ENCODE measurements at regions of chr4 and their contacts with region 1.

Region 1: GRCh38 chr4:107757864-107758476 is 37.9 kb upstream of the PAPSS1 start:
- DNase-seq: no peak
- H3K4me3 Mint-ChIP-seq: no peak overlapping the region
- H3K27ac Mint-ChIP-seq: no peak overlapping the region
- H3K4me1 Mint-ChIP-seq: no peaks in the 10 kb centered on the region
- H3K27me3 Mint-ChIP-seq: peaks cover 8% of the 10 kb centered on the region

Region 2: GRCh38 chr4:107115185-107115847 is 642.7 kb before region 1 on chr4:
- CTCF ChIA-PET with region 1: no interaction called
- DNase-seq: no peak
- H3K4me3 Mint-ChIP-seq: no peak overlapping the region
- H3K27ac Mint-ChIP-seq: no peak overlapping the region
- H3K4me1 Mint-ChIP-seq: no peaks in the 10 kb centered on the region
- H3K27me3 Mint-ChIP-seq: no peaks in the 10 kb centered on the region

Region 3: GRCh38 chr4:107780665-107781064 is 22.7 kb after region 1 on chr4:
- CTCF ChIA-PET with region 1: no interaction called
- DNase-seq: peak; percentile 23
- H3K4me3 Mint-ChIP-seq: no peak overlapping the region
- H3K27ac Mint-ChIP-seq: no peak overlapping the region
- H3K4me1 Mint-ChIP-seq: no peaks in the 10 kb centered on the region
- H3K27me3 Mint-ChIP-seq: peaks cover 3% of the 10 kb centered on the region

Region 4: GRCh38 chr4:107913281-107913899 is 155.4 kb after region 1 on chr4:
- CTCF ChIA-PET with region 1: interaction called, 11 read pairs
- DNase-seq: peak; percentile 22
- H3K4me3 Mint-ChIP-seq: no peak overlapping the region
- H3K27ac Mint-ChIP-seq: no peak overlapping the region
- H3K4me1 Mint-ChIP-seq: no peaks in the 10 kb centered on the region
- H3K27me3 Mint-ChIP-seq: peaks cover 4% of the 10 kb centered on the region

Region 5: GRCh38 chr4:108087293-108087967 is 329.5 kb after region 1 on chr4:
- CTCF ChIA-PET with region 1: no interaction called
- DNase-seq: no peak
- H3K4me3 Mint-ChIP-seq: no peak overlapping the region
- H3K27ac Mint-ChIP-seq: peak overlapping the region; percentile 67
- H3K4me1 Mint-ChIP-seq: peaks cover 63% of the 10 kb centered on the region
- H3K27me3 Mint-ChIP-seq: no peaks in the 10 kb centered on the region